ENCODE measurements at regions of chr6 and their contacts with region 1.

Region 1: GRCh38 chr6:143187238-143187923 is 126.7 kb downstream of the AIG1 start:
- DNase-seq: no peak
- ATAC-seq: no peak
- H3K4me3 ChIP-seq: no peak overlapping the region
- H3K27ac ChIP-seq: no peak overlapping the region
- H3K4me1 ChIP-seq: no peaks in the 10 kb centered on the region
- H3K27me3 ChIP-seq: no peaks in the 10 kb centered on the region
- CTCF ChIP-seq: no peak
- EP300 ChIP-seq: no peak
- POLR2A ChIP-seq: no peak
- RAD21 ChIP-seq: no peak

Region 2: DNA sequence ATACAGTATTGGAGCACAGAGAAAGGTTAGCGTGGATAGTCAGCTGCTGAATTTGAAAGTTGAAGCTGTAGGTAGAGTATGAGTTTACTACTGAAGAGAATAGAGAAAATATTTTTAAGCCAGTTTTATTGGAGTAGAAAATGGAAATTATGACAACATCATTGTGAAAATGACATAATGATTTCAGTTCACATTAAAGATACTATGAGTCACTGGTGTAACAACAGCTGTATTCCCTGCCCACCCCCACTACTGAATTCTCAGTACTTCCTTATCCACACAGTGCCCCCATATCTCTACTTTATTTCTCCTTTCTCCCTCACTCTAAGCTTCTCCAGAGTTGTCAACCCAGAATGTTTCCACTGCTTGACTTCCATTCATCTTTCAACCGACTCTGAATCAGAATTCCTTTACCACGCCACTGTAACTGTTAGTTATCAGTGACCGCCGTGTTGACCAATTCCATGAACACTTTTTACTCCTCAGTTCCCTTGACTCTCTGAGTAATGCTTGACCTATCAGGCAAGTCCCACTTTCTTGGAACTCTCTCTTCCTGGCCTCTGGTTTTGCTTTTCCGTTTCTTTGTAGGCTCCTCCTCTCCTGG is 12.9 kb after region 1 on chr6:
- CTCF ChIA-PET with region 1: no interaction called
- POLR2A ChIA-PET with region 1: interaction called, 22 read pairs
- in situ Hi-C with region 1: no loop called
- intact Hi-C with region 1: no loop called
- DNase-seq: peak in 3 of 4 experiments; percentile 30 to 78 (median 56)
- ATAC-seq: peak; percentile 56
- H3K4me3 ChIP-seq: no peak overlapping the region
- H3K27ac ChIP-seq: peak overlapping the region; percentile 73; the same call in 2 of the 3 replicates
- H3K4me1 ChIP-seq: peaks cover 4 to 62% of the 10 kb centered on the region in 2 experiments
- H3K27me3 ChIP-seq: no peaks in the 10 kb centered on the region
- CTCF ChIP-seq: no peak
- EP300 ChIP-seq: peak; percentile 57; the same call in 1 of the 2 replicates
- POLR2A ChIP-seq: peak; percentile 14; the same call in 1 of the 2 replicates
- RAD21 ChIP-seq: peak in 1 of 2 experiments; percentile 23; a peak in 1 of 4 replicates

Region 3: DNA sequence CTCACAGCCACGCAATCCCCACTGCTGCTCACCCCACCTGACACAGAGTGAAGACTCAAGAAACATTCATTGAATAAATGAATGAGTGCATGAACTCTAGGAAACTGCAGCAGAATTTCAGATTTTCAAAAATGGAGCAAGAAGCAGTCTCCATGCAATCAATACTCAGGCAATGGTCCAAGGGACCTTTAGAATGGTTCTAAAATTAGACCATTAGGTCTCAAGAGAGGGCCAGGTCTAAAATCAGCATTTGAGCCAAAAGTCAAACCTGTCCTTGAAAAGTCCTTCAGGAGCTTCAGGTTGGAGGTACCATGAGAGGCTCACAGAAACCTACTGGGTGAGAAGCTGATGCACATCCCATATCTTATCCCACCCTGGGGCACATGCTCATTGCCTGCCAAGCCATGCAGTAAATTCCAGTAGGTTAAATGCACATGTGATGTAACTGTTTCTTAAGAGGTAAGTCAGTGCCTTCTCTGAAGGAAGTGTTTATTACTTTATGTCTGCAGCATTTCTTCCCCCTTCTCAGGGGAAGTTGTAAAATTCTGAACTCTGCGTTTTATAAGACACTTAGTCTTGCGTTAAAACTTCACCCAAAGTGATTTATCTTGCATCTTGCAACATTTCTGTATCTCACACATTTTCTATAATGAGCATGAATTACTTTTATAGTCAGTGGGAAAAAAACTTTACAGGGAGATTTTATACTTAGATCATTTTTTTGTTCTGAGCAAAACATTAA is 136.5 kb after region 1 on chr6:
- CTCF ChIA-PET with region 1: no interaction called
- POLR2A ChIA-PET with region 1: no interaction called
- in situ Hi-C with region 1: no loop called
- intact Hi-C with region 1: no loop called
- DNase-seq: no peak
- ATAC-seq: no peak
- H3K4me3 ChIP-seq: no peak overlapping the region
- H3K27ac ChIP-seq: no peak overlapping the region
- H3K4me1 ChIP-seq: no peaks in the 10 kb centered on the region
- H3K27me3 ChIP-seq: no peaks in the 10 kb centered on the region
- CTCF ChIP-seq: no peak
- EP300 ChIP-seq: no peak
- POLR2A ChIP-seq: no peak
- RAD21 ChIP-seq: no peak